ENCODE measurements at regions of chr2 and their contacts with region 1.

Region 1: DNA sequence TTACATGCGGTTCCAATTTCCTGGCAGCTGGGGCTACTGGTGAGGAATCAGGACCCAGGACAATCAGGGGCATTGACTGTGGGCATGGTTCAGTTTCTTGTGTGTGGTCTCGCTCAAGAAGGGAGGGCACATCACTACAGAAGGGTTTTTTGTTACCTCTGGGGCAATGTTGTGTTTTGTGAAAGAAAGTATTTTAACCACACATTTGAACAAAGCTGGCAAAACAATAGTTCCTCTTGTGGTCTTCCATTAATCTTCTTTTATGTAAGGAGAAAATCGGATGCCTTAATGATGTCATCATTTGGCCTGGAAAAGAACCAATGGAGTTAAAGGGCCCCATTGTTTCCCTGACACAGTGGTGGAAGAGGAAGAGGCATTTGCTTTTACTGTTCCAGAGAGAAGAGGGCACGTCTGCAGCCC is 197.4 kb downstream of the SH3BP4 start:
- DNase-seq: no peak
- H3K4me3 ChIP-seq: no peak overlapping the region
- H3K4me1 ChIP-seq: no peaks in the 10 kb centered on the region
- H3K27me3 ChIP-seq: peaks cover 6% of the 10 kb centered on the region; the same call in 1 of the 2 replicates

Region 2: DNA sequence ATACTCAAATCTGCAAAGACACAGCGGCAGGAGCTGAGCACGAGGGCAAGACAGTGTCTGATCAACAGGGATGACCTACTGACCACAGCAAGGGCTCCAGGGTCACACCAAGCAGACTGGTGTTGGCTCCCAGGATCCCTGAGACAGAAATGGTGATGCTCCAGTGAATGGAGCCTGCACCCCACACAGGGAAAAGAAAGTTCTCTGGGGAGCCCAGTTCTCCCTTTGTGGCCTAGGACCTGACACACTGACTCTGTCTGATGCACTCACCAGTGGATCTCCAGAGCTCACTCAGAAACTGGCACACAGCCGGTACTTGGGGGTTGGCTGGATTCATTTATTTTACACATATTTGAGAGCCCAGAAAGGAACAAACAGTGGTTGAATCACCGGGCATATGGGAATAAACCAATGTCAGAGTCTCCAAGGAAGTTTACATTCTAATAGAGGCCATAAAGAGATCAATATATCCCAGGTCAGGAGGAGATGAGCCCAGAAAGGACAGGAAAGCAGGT is 436.8 kb before region 1 on chr2:
- in situ Hi-C with region 1: no loop called
- DNase-seq: no peak
- H3K4me3 ChIP-seq: no peak overlapping the region
- H3K4me1 ChIP-seq: peaks cover 4% of the 10 kb centered on the region
- H3K27me3 ChIP-seq: no peaks in the 10 kb centered on the region

Region 3: GRCh38 chr2:235314371-235314930 is 165.2 kb after region 1 on chr2:
- in situ Hi-C with region 1: no loop called
- DNase-seq: no peak
- H3K4me3 ChIP-seq: no peak overlapping the region
- H3K4me1 ChIP-seq: no peaks in the 10 kb centered on the region
- H3K27me3 ChIP-seq: no peaks in the 10 kb centered on the region

Region 4: DNA sequence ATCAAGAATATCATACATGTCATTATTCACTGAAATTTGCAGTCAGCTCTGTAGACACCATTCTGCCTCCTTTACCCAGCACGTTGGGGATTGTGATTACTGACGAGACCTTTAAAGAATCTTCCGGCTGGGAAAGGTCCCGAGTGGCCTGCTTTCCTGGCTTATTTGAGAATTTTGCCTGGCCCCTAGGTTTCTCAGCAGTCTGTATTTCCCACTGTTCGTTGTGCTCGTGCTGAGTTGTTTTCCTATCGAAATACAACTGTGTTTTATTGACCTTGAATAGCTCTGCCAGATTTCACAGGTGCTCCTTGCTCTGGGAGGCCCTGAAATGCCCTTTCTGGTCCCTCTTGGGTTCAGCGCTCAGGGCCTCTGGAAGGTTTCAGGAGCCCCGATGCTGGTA is 439.5 kb after region 1 on chr2:
- in situ Hi-C with region 1: loop called (anchors 10 kb)
- DNase-seq: no peak
- H3K4me3 ChIP-seq: no peak overlapping the region
- H3K4me1 ChIP-seq: no peaks in the 10 kb centered on the region
- H3K27me3 ChIP-seq: no peaks in the 10 kb centered on the region

Region 5: GRCh38 chr2:235802538-235803427 is 653.5 kb after region 1 on chr2:
- in situ Hi-C with region 1: no loop called
- DNase-seq: no peak
- H3K4me3 ChIP-seq: no peak overlapping the region
- H3K4me1 ChIP-seq: no peaks in the 10 kb centered on the region
- H3K27me3 ChIP-seq: no peaks in the 10 kb centered on the region